ENCODE measurements at regions of chr2 and their contacts with region 1.

Region 1: DNA sequence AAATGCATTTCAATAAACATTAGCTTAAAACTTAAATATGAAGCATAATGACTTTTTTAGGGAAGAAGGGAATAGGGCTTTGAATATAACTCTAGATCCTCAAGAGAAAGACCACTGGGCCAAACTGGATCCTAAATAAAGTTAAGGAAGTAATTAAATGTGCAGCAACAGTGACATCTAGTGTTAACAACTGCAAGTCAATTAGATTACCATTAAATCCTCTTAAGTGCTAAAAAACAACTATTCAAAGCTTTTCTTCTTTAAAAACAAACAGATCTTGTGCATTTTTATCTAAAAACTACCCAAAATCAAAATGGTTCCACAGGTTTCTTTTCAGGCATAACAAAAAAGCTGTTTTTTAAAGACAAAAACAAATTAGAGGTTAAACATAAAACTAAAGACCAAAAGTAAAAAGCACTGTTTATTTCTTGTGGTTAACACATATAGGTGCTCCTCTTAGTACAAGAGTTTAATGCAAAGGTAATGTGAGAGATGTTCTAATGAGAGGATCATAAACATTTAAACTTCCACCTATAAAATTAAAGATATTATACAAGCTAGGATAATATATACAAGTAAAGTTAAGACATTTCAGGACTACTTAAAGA is 111.4 kb downstream of the THADA start:
- DNase-seq: peak; percentile 48
- H3K4me3 ChIP-seq: no peak overlapping the region
- H3K27ac ChIP-seq: peak overlapping the region; percentile 10 to 81; a peak in 3 of 4 replicates
- H3K4me1 ChIP-seq: peaks cover 0 to 15% of the 10 kb centered on the region in 2 experiments; a peak in 2 of 4 replicates
- H3K27me3 ChIP-seq: no peaks in the 10 kb centered on the region
- CTCF ChIP-seq: peak; percentile 86
- EP300 ChIP-seq: no peak
- RAD21 ChIP-seq: peak; percentile 94

Region 2: GRCh38 chr2:42562474-42563144 is 921.8 kb before region 1 on chr2:
- CTCF ChIA-PET with region 1: no interaction called
- POLR2A ChIA-PET with region 1: no interaction called
- DNase-seq: no peak
- H3K4me3 ChIP-seq: no peak overlapping the region
- H3K27ac ChIP-seq: no peak overlapping the region
- H3K4me1 ChIP-seq: peaks cover 0 to under 1% of the 10 kb centered on the region in 2 experiments; a peak in 1 of 4 replicates
- H3K27me3 ChIP-seq: no peaks in the 10 kb centered on the region; the same call in 1 of the 2 replicates
- CTCF ChIP-seq: no peak
- EP300 ChIP-seq: no peak
- RAD21 ChIP-seq: no peak

Region 3: DNA sequence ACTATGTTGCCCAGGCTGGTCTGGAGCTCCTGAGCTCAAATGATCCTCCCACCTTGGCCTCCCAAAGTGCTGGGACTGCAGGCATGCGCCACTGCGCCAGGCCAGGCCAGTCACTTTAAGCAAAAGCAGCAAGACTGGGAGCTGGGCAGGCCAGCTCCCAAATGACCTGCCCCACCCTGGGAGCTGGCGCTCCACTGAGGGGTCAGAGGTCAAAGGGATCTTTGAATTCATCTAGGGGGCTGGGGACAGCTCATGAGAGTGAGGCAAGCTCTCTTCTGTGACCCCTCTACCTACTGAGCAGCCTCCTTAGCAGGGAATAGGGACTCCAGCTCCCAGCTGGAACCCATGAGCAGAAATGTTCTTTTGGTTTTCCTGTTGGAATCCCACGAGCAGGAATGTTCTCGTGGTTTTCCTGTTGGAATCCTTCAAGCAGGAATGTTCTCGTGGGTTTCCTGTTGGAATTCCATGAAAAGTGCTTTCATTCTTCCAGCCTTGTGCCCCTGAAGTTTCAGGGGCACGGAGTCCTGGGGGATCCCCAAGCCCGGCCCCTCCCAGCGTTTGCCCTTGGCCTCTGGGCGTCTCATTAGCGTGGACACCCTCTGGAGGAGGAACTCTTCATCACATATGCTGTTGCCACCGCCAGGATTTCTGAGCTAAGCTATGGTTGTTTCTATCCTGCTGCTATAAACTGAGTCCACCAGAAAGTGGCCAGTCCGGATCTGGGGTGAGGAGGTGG is 530.0 kb before region 1 on chr2:
- CTCF ChIA-PET with region 1: interaction called, 15 read pairs
- POLR2A ChIA-PET with region 1: no interaction called
- DNase-seq: no peak
- H3K4me3 ChIP-seq: no peak overlapping the region
- H3K27ac ChIP-seq: peak overlapping the region in 1 of 2 experiments; percentile 64; a peak in 2 of 4 replicates
- H3K4me1 ChIP-seq: peaks cover 0 to 21% of the 10 kb centered on the region in 2 experiments; a peak in 2 of 4 replicates
- H3K27me3 ChIP-seq: no peaks in the 10 kb centered on the region
- CTCF ChIP-seq: no peak
- EP300 ChIP-seq: peak in 1 of 2 experiments; percentile 37; a peak in 1 of 4 replicates
- RAD21 ChIP-seq: no peak

Region 4: GRCh38 chr2:43226558-43226954 is 257.9 kb before region 1 on chr2 and contains the start of gene ZFP36L2:
- CTCF ChIA-PET with region 1: interaction called, 108 read pairs
- POLR2A ChIA-PET with region 1: interaction called, 14 read pairs
- DNase-seq: peak; percentile 99
- H3K4me3 ChIP-seq: peak within 1 kb of the TSS; percentile 95 to 97
- H3K27ac ChIP-seq: peak within 1 kb of the TSS; percentile 94 to 95
- H3K4me1 ChIP-seq: peaks cover 19 to 53% of the 10 kb centered on the region in 2 experiments
- H3K27me3 ChIP-seq: no peaks in the 10 kb centered on the region
- CTCF ChIP-seq: no peak
- EP300 ChIP-seq: 0 out of 4 replicates have a peak, but pooled peaks of 1 of the 2 experiments have one; percentile 3
- RAD21 ChIP-seq: no peak
- polyA plus RNA-seq, gene ZFP36L2: 12.5 and 18.4 TPM in 2 replicates

Region 5: DNA sequence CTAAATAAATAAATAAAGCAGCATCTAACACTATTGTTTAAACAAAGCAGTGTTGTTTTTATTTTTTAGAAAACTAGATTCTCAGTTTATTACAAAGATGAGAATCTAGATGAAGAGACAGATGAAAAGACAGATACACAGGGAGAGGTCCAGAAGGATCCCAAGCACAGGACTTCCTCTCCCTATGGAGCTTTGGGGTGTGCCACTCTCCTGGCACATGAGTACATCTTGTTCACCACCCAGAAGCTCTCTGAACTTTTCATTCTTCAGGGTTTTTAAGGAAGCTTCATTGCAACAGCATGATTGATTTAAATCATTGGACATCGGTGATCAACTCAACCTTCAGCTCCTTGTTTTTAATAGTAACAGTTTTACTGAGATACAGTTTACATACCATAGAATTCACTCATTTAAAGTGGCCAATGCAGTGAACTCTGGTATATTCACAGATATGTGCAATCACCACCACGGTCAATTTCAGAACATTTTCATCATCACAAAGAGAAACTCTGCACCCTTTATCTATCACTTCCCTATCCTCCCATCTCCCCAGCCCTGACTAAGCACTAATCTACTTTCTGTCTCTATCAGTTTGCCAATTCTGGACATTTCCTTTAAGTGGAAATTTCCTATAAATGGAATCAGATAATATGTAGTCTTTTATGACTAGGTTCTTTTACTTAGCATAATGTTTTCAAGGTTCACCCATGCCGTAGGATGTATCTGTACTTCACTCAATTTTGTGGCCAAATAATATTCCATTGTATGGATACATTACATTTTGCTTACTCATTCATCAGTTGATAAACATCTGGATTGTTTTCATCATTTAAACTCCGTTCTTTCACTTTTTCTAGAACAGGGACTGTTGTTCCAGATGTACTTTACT is 195.8 kb before region 1 on chr2:
- CTCF ChIA-PET with region 1: interaction called, 12 read pairs
- POLR2A ChIA-PET with region 1: no interaction called
- DNase-seq: no peak
- H3K4me3 ChIP-seq: no peak overlapping the region
- H3K27ac ChIP-seq: no peak overlapping the region
- H3K4me1 ChIP-seq: peaks cover 0 to 3% of the 10 kb centered on the region in 2 experiments; a peak in 1 of 4 replicates
- H3K27me3 ChIP-seq: no peaks in the 10 kb centered on the region
- CTCF ChIP-seq: no peak
- EP300 ChIP-seq: no peak
- RAD21 ChIP-seq: no peak

Region 6: DNA sequence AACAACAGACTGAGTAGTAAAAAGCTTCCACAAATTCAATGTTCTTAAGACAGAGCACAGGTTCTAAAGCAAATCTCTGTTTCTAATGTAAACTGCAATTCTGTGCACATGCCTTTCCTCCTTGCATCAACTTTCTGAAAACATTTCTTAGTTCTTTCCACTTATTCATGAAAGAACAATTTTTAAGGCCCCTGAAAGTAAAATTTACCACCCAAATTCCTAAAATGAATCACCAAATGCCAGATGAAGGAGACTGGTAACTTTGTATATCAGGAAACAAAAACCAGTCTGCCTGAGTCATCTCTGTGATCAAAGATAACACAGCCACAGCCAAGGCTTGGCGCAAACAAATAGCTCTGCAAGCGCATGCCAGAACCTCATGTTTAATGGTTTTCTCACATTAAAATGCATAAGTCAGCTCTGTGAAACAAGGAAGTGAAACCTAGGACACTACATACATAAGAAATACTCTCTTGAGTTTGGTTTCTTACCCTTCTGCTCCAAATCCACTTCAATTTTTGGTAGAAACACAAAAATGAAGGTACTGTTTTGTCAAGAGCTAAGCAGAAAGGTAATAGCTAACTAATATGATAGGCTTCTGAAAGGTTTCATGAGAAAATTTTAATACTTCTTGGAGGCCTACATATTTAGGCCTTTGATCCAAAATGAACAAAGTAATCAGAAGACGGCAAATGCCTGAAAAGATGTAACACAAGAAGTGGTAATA is 58.0 kb before region 1 on chr2:
- CTCF ChIA-PET with region 1: interaction called, 10 read pairs
- POLR2A ChIA-PET with region 1: no interaction called
- DNase-seq: peak; percentile 81
- H3K4me3 ChIP-seq: no peak overlapping the region
- H3K27ac ChIP-seq: peak overlapping the region; percentile 97 to 99
- H3K4me1 ChIP-seq: peaks cover 20 to 31% of the 10 kb centered on the region in 2 experiments
- H3K27me3 ChIP-seq: no peaks in the 10 kb centered on the region
- CTCF ChIP-seq: no peak
- EP300 ChIP-seq: peak; percentile 93 to 100
- RAD21 ChIP-seq: peak; percentile 53

Region 7: DNA sequence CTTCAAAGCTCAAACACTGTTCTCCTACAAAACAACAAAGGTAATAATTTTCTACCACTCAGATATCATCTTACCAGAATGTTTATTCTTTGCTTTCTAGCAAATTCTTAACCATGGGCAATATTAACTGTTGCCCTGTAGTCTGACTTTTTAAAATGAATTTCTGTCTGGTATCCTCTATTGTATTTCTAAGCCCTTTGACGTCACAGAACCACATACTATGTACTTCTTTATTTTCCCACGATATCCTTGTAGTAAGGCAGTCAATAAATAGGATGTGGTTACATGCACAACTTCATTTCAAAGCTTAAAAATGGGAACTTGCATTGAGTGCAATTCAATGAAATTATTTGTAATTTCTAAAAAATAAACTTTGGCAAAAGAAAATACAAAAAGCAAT is 52.7 kb after region 1 on chr2:
- CTCF ChIA-PET with region 1: interaction called, 38 read pairs
- POLR2A ChIA-PET with region 1: no interaction called
- DNase-seq: no peak
- H3K4me3 ChIP-seq: no peak overlapping the region
- H3K27ac ChIP-seq: no peak overlapping the region
- H3K4me1 ChIP-seq: peaks cover 8 to 13% of the 10 kb centered on the region in 2 experiments
- H3K27me3 ChIP-seq: no peaks in the 10 kb centered on the region
- CTCF ChIP-seq: no peak
- EP300 ChIP-seq: no peak
- RAD21 ChIP-seq: no peak